Activated CD4-positive, alpha-beta T cell treated with anti-CD3 and anti-CD28 coated beads for 36 hours (primary cell): ENCODE measurements at regions of chr11 and their contacts with region 1.

Region 1: GRCh38 chr11:65615229-65615941 is at the start of gene PCNX3:
- DNase-seq: peak; percentile 100
- ATAC-seq: peak; percentile 93
- H3K4me3 Mint-ChIP-seq: peak within 1 kb of the TSS; percentile 96
- H3K27ac Mint-ChIP-seq: peak within 1 kb of the TSS; percentile 94
- H3K4me1 Mint-ChIP-seq: peaks cover 38% of the 10 kb centered on the region
- H3K27me3 Mint-ChIP-seq: no peaks in the 10 kb centered on the region
- total RNA-seq, gene PCNX3: 27.9 to 30.7 TPM

Region 2: GRCh38 chr11:65027213-65028067 is 587.9 kb before region 1 on chr11 and contains the start of gene SNX15:
- CTCF ChIA-PET with region 1: no interaction called
- POLR2A ChIA-PET with region 1: no interaction called
- intact Hi-C with region 1: loop called in 1 of 2 experiments (anchors 1 kb)
- DNase-seq: peak; percentile 94
- ATAC-seq: peak; percentile 91
- H3K4me3 Mint-ChIP-seq: peak within 1 kb of the TSS; percentile 73
- H3K27ac Mint-ChIP-seq: peak within 1 kb of the TSS; percentile 86
- H3K4me1 Mint-ChIP-seq: peaks cover 21% of the 10 kb centered on the region
- H3K27me3 Mint-ChIP-seq: no peaks in the 10 kb centered on the region
- total RNA-seq, gene SNX15: 12.1 to 14.2 TPM

Region 3: DNA sequence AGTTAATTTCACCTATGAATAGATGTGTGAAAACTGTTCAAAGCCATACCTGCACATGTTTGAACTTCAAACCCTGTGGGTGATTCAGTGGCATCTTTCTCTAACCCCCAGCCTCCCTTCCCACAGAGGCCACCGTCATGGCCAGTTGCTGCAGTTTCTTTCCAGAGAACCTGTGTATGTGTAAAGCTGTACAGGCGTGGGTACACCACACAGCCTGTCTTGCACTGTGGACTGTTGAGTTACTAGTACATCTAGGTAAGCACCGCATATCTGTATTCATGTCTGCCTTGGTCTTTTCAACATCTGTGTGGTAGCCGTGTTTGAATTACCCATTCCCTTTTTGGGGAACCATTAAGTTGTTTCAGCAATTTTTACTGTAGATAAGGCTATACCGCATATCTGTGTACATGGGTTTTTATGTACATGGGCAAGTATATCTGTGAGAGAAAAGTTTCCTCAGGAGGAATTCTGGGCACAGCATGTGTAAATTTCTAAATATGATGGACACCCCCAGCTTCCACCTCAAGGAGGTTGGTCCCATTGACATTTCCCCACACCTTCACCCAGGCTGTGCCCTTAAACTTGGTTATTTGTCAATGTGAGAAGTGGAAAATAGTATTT is 178.9 kb before region 1 on chr11:
- CTCF ChIA-PET with region 1: no interaction called
- POLR2A ChIA-PET with region 1: no interaction called
- intact Hi-C with region 1: no loop called
- DNase-seq: peak; percentile 28
- ATAC-seq: no peak
- H3K4me3 Mint-ChIP-seq: no peak overlapping the region
- H3K27ac Mint-ChIP-seq: no peak overlapping the region
- H3K4me1 Mint-ChIP-seq: peaks cover 85% of the 10 kb centered on the region
- H3K27me3 Mint-ChIP-seq: no peaks in the 10 kb centered on the region

Region 4: GRCh38 chr11:65524741-65525545 is 90.4 kb before region 1 on chr11 and contains the start of gene SCYL1:
- CTCF ChIA-PET with region 1: no interaction called
- POLR2A ChIA-PET with region 1: interaction called, 4 read pairs
- intact Hi-C with region 1: loop called in 1 of 2 experiments (anchors 2 kb)
- DNase-seq: peak; percentile 91
- ATAC-seq: peak; percentile 85
- H3K4me3 Mint-ChIP-seq: peak within 1 kb of the TSS; percentile 86
- H3K27ac Mint-ChIP-seq: peak within 1 kb of the TSS; percentile 93
- H3K4me1 Mint-ChIP-seq: peaks cover 51% of the 10 kb centered on the region
- H3K27me3 Mint-ChIP-seq: no peaks in the 10 kb centered on the region
- total RNA-seq, gene SCYL1: 66.5 to 78.8 TPM

Region 5: DNA sequence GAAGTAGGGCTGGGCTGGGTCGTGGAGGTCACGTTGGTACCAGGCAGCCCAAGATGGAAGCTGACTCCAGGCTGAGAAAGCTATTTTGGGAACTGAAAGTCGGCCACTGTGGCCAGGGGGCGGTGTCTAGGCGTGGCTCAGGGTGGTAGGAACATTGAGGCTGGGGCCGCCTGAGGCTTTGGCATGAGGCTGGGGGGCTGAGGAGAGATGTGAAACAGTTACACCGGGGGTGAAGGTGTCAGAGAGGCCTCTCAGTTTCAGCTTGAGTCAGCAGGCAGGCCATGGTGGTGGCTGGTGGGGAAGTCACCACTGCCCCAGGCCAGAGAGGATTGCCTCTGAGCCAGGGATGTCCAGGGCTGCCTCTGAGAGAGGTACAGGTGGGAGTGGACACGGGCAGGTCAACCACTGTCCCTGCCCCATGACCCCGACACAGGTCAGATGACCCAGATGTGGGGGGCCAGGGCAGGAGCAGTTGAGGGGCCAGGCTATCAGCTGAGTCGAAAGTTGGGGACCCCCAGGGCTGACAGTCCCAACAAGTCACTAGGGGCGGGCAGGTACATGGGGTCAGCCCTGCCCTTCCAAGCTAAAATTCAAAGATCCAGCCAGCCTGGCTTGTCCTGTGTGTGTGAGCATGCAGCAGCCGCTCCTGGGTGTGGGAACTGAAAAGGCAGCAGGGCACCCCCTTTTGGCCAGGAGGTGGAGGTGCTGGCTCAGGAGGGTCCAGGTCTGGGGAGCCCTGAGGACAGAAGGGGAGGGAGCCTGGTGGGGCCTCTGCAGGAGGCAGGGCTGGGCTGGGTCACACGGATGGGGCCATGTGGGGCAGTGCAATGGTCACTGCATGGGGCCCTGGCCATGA is 27.0 kb before region 1 on chr11:
- CTCF ChIA-PET with region 1: interaction called, 6 read pairs
- POLR2A ChIA-PET with region 1: interaction called, 3 read pairs
- intact Hi-C with region 1: loop called in 1 of 2 experiments (anchors 1 kb)
- DNase-seq: peak; percentile 88
- ATAC-seq: peak; percentile 86
- H3K4me3 Mint-ChIP-seq: peak overlapping the region; percentile 43
- H3K27ac Mint-ChIP-seq: peak overlapping the region; percentile 90
- H3K4me1 Mint-ChIP-seq: peaks cover 39% of the 10 kb centered on the region
- H3K27me3 Mint-ChIP-seq: no peaks in the 10 kb centered on the region

Region 6: GRCh38 chr11:65662799-65663638 is 47.6 kb after region 1 on chr11 and contains the start of gene RELA:
- CTCF ChIA-PET with region 1: no interaction called
- POLR2A ChIA-PET with region 1: interaction called, 3 read pairs
- intact Hi-C with region 1: loop called (anchors 1 kb)
- DNase-seq: peak; percentile 96
- ATAC-seq: peak; percentile 90
- H3K4me3 Mint-ChIP-seq: peak within 1 kb of the TSS; percentile 88
- H3K27ac Mint-ChIP-seq: peak within 1 kb of the TSS; percentile 97
- H3K4me1 Mint-ChIP-seq: peaks cover 41% of the 10 kb centered on the region
- H3K27me3 Mint-ChIP-seq: no peaks in the 10 kb centered on the region
- total RNA-seq, gene RELA: 76.9 to 109 TPM

Region 7: DNA sequence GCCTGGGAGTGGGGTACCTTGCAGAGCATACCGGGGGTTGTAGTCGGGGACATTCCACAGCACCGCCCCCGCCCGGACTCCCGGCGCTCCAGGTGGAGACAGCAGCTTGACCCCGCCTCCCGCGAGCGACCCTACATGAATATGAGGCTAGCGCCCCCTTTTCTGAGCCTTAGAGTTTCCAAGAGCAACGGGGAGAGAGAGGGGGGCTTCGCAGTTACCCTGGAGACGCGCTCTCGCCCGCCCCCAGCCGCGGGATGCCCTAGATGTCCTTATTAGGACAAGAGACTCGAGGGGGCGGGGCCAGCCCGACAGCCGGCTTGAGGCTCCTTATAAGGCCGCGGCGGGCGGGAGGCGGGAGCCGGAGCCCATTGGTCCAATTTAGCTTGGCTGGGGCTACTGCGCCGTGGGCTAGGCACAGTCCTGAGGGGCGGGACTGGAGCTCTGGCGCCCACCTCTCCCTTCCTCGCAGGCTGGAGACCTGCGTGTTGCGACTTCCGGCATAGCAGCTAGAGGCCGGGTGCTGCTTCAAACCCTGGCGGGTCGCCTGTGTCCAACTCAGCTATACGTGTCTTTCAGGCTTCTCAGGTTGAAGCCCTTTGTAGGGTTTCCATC is 243.9 kb after region 1 on chr11:
- CTCF ChIA-PET with region 1: interaction called, 5 read pairs
- POLR2A ChIA-PET with region 1: interaction called, 6 read pairs
- intact Hi-C with region 1: loop called (anchors 1 kb)
- DNase-seq: peak; percentile 99
- ATAC-seq: peak; percentile 73
- H3K4me3 Mint-ChIP-seq: peak overlapping the region; percentile 91
- H3K27ac Mint-ChIP-seq: peak overlapping the region; percentile 99
- H3K4me1 Mint-ChIP-seq: peaks cover 42% of the 10 kb centered on the region
- H3K27me3 Mint-ChIP-seq: no peaks in the 10 kb centered on the region

Region 8: DNA sequence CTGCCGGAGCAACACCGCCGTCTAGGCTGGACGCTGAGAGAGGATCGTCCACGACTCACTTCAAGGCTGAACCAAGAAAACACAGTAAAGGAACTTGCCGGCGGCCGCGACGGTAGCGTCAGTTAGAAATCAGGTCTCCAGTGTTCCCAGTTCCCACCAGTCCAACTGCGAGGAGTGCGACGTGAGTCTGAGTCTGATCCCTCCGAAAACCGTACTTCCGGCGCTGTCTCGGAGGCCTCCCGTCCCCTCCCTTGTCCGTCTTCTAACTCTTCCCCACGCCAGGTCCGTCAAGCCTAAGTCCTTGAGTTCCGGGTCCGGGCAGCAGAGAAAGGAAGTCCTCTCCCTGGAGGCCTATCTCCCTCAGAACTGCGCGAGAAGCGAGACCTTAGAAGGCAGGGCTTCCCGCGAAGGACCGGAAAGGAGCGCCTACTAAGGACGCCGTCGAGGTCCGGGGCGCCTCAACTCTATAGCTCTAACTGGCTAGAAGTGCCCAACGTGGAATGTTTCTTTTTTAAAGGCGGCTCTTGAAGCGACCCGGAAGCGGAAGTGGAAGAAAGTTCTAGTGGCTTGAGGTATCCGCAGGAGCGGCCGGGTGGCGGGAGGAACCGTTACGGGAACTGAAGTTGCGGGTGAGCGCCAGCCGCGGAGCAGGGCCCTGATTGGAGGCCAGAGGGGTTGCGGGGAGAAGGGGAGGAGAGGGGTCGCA is 386.7 kb after region 1 on chr11 and contains the starts of genes BANF1 and EIF1AD:
- CTCF ChIA-PET with region 1: no interaction called
- POLR2A ChIA-PET with region 1: no interaction called
- intact Hi-C with region 1: loop called in 1 of 2 experiments (anchors 1 kb)
- DNase-seq: peak; percentile 95
- ATAC-seq: peak; percentile 88
- H3K4me3 Mint-ChIP-seq: peak within 1 kb of the TSS; percentile 100
- H3K27ac Mint-ChIP-seq: peak within 1 kb of the TSS; percentile 98
- H3K4me1 Mint-ChIP-seq: peaks cover 36% of the 10 kb centered on the region
- H3K27me3 Mint-ChIP-seq: no peaks in the 10 kb centered on the region
- total RNA-seq, gene BANF1: 233 to 293 TPM
- total RNA-seq, gene EIF1AD: 45.1 to 52.2 TPM